Activated CD4-positive, alpha-beta memory T cell treated with anti-CD3 and anti-CD28 coated beads for 36 hours (primary cell): ENCODE measurements at regions of chr6 and their contacts with region 1.

Region 1: DNA sequence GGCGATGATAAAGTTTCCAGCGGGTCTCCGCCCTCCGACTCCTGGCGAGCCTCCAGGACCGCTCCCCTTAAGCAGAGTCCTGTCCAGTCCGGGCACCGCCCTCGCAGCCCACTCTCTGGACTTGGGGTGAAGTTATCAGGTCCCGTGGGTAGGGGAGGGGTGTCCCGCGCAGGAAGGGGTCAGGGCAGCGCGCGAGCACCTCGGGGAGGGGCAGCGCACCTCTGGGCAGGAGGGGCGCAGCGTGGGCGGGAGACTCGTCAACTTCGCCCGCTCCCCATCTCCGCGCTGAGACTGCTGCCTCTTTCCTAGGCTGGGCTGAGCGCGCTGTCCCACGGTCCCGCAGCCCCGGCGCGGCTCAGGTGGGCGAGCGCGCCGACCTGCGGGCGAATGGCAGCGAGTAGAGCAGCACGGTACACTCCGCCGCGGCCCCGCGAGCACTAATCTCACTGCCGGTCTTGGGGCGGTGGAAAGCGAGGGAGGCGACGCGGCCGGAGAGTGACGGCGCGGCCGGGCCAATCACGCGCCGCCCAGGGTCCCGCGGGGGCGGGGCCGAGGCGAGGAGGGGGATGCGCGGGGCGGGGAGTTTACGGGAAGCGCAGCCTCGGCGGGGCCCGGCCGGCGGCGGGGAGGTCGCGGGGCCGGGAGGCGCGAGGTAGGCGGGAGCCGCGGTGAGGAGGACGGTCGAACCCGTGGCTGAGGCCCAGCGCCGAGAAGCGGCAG is at the start of gene MAN1A1:
- DNase-seq: peak; percentile 92
- H3K4me3 Mint-ChIP-seq: peak within 1 kb of the TSS; percentile 94
- H3K27ac Mint-ChIP-seq: peak within 1 kb of the TSS; percentile 93
- H3K4me1 Mint-ChIP-seq: peaks cover 43% of the 10 kb centered on the region
- H3K27me3 Mint-ChIP-seq: no peaks in the 10 kb centered on the region
- total RNA-seq, gene MAN1A1: 21.8 to 23.9 TPM

Region 2: DNA sequence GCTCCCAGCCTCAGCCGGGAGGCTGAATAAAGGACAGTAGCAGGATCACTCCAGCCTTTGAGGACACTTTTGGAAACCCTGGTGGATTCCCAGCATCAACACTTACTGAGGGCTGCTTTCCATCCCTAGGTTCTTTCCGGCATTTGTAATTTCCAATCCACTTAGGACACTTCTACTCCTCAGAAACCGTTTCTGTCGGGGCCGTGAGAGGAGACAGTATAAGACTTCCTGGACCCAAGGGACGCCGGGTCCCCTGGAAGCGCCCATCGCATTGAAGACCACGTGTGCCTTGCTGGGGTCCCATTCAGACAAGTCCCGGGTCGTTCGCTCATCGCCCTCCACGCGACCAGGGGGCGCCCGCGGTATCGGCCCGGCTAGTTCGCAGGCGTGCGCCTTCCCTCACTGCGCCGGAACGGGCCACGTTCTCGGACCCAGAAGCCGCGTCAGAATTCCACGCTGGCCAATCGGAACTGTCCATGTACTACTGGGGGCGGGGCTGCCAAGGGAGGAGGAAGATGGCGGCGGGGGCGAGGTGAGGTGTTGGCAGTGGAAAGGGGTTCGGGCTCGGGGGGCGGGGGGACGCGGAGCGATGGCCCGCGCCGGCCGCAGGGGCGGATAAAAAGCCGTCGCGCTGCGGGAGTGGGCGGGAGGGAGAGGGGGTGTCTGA is 1674.4 kb before region 1 on chr6 and contains the start of gene NUS1:
- CTCF ChIA-PET with region 1: no interaction called
- POLR2A ChIA-PET with region 1: no interaction called
- intact Hi-C with region 1: loop called (anchors 5 kb)
- DNase-seq: peak; percentile 99
- H3K4me3 Mint-ChIP-seq: peak within 1 kb of the TSS; percentile 95
- H3K27ac Mint-ChIP-seq: peak within 1 kb of the TSS; percentile 89
- H3K4me1 Mint-ChIP-seq: peaks cover 43% of the 10 kb centered on the region
- H3K27me3 Mint-ChIP-seq: no peaks in the 10 kb centered on the region
- total RNA-seq, gene NUS1: 33.6 to 33.9 TPM

Region 3: GRCh38 chr6:119078376-119079282 is 270.9 kb before region 1 on chr6 and contains the start of gene FAM184A:
- CTCF ChIA-PET with region 1: no interaction called
- POLR2A ChIA-PET with region 1: interaction called, 3 read pairs
- intact Hi-C with region 1: loop called (anchors 1 kb)
- DNase-seq: peak; percentile 77
- H3K4me3 Mint-ChIP-seq: peak within 1 kb of the TSS; percentile 88
- H3K27ac Mint-ChIP-seq: peak within 1 kb of the TSS; percentile 90
- H3K4me1 Mint-ChIP-seq: peaks cover 46% of the 10 kb centered on the region
- H3K27me3 Mint-ChIP-seq: no peaks in the 10 kb centered on the region
- total RNA-seq, gene FAM184A: 7.6 to 10.8 TPM

Region 4: DNA sequence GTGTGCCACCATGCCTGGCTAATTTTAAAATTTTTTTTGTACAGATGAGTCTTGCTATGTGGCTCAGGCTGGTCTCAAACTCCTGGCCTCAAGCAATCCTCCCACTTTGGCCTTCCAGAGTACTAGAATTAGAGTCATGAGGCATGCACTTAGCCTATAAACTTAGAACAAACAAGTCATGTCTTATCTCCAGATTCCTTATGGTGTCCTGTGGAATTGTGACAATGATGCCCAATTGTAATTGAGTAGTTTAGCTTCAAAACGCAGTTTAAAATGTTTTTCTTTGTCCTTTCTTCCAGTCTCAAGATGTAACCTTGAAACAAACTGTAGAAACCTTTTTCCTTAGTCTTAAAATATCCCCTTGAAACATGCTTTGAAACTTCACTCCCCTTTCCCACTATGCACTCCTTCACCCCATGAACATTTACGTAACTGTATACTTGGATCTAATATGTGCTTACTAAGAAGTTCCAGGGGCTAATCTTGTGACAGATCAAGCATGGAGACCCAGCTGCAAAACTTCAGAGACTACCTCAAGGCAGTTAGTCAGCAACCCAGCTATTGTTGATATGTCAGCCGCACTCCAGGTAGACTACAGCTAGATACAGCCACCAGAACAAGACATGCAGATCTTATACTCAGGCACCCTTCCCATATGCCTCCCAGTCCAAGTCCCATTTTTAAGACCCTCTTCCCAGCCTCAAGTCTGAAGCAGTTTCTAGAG is 46.2 kb before region 1 on chr6:
- CTCF ChIA-PET with region 1: no interaction called
- POLR2A ChIA-PET with region 1: no interaction called
- intact Hi-C with region 1: no loop called
- DNase-seq: no peak
- H3K4me3 Mint-ChIP-seq: no peak overlapping the region
- H3K27ac Mint-ChIP-seq: no peak overlapping the region
- H3K4me1 Mint-ChIP-seq: peaks cover 4% of the 10 kb centered on the region
- H3K27me3 Mint-ChIP-seq: no peaks in the 10 kb centered on the region

Region 5: GRCh38 chr6:119313937-119314884 is 35.3 kb before region 1 on chr6:
- CTCF ChIA-PET with region 1: interaction called, 4 read pairs
- POLR2A ChIA-PET with region 1: interaction called, 20 read pairs
- intact Hi-C with region 1: loop called (anchors 1 kb)
- DNase-seq: peak; percentile 61
- H3K4me3 Mint-ChIP-seq: peak overlapping the region; percentile 22
- H3K27ac Mint-ChIP-seq: peak overlapping the region; percentile 89
- H3K4me1 Mint-ChIP-seq: peaks cover 56% of the 10 kb centered on the region
- H3K27me3 Mint-ChIP-seq: no peaks in the 10 kb centered on the region

Region 6: GRCh38 chr6:119533603-119534279 is 184.3 kb after region 1 on chr6:
- CTCF ChIA-PET with region 1: no interaction called
- POLR2A ChIA-PET with region 1: no interaction called
- intact Hi-C with region 1: loop called (anchors 5 kb)
- DNase-seq: no peak
- H3K4me3 Mint-ChIP-seq: no peak overlapping the region
- H3K27ac Mint-ChIP-seq: no peak overlapping the region
- H3K4me1 Mint-ChIP-seq: peaks cover 8% of the 10 kb centered on the region
- H3K27me3 Mint-ChIP-seq: peaks cover 7% of the 10 kb centered on the region

Region 7: DNA sequence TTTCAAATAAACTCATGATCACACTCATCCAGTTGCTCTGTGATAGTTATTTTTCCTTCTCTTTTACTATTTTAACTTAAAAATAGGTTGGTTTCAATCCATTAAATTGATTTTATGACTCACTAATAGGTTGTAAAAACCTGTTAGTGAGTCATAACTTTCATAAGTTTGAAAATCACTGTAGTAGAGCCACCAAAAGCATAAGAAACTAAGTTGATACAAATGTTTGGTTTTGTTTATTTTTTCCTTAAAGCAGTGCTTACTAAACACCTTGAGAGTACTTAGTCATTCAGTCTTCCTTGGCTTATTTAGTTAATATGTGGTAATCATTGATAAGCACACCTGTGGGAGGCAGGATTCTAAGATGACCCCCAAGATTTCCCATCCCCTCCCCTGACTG is 312.1 kb after region 1 on chr6:
- CTCF ChIA-PET with region 1: no interaction called
- POLR2A ChIA-PET with region 1: no interaction called
- intact Hi-C with region 1: no loop called
- DNase-seq: no peak
- H3K4me3 Mint-ChIP-seq: no peak overlapping the region
- H3K27ac Mint-ChIP-seq: no peak overlapping the region
- H3K4me1 Mint-ChIP-seq: no peaks in the 10 kb centered on the region
- H3K27me3 Mint-ChIP-seq: no peaks in the 10 kb centered on the region